ENCODE measurements at regions of chr17 and their contacts with region 1.

Region 1: GRCh38 chr17:28196634-28197033 is 122.4 kb upstream of the TMEM97 start:
- DNase-seq: no peak
- ATAC-seq: no peak
- H3K4me3 ChIP-seq: no peak overlapping the region
- H3K27ac ChIP-seq: no peak overlapping the region
- H3K4me1 ChIP-seq: no peaks in the 10 kb centered on the region
- H3K27me3 ChIP-seq: no peaks in the 10 kb centered on the region
- CTCF ChIP-seq: no peak
- EP300 ChIP-seq: no peak
- POLR2A ChIP-seq: no peak
- RAD21 ChIP-seq: no peak

Region 2: GRCh38 chr17:28216528-28216927 is 19.9 kb after region 1 on chr17:
- CTCF ChIA-PET with region 1: no interaction called
- POLR2A ChIA-PET with region 1: no interaction called
- in situ Hi-C with region 1: no loop called
- intact Hi-C with region 1: loop called (anchors 1 kb)
- DNase-seq: no peak
- ATAC-seq: peak; percentile 67; the same call in 2 of the 3 replicates
- H3K4me3 ChIP-seq: no peak overlapping the region
- H3K27ac ChIP-seq: no peak overlapping the region
- H3K4me1 ChIP-seq: no peaks in the 10 kb centered on the region; a peak in 1 of 5 replicates
- H3K27me3 ChIP-seq: no peaks in the 10 kb centered on the region
- CTCF ChIP-seq: no peak
- EP300 ChIP-seq: no peak
- POLR2A ChIP-seq: no peak
- RAD21 ChIP-seq: no peak

Measured in K562 (cell line).